ENCODE measurements at regions of chr17 and their contacts with region 1.

Region 1: GRCh38 chr17:3965118-3965803 is 1.0 kb upstream of the ATP2A3 start:
- DNase-seq: peak; percentile 37 to 71 (median 66)
- ATAC-seq: peak; percentile 64
- H3K4me3 ChIP-seq: peak overlapping the region; percentile 69
- H3K4me3 Mint-ChIP-seq: peak overlapping the region; percentile 88 to 96 (median 94)
- H3K27ac ChIP-seq: peak overlapping the region; percentile 75
- H3K27ac Mint-ChIP-seq: peak overlapping the region; percentile 82 to 97 (median 94)
- H3K4me1 ChIP-seq: peaks cover 31 to 36% of the 10 kb centered on the region in 2 donors
- H3K4me1 Mint-ChIP-seq: peaks cover 34 to 50% (median 44%) of the 10 kb centered on the region in 7 donors
- H3K27me3 ChIP-seq: no peaks in the 10 kb centered on the region
- H3K27me3 Mint-ChIP-seq: peaks cover 0 to 4% (median 0%) of the 10 kb centered on the region in 5 donors

Region 2: DNA sequence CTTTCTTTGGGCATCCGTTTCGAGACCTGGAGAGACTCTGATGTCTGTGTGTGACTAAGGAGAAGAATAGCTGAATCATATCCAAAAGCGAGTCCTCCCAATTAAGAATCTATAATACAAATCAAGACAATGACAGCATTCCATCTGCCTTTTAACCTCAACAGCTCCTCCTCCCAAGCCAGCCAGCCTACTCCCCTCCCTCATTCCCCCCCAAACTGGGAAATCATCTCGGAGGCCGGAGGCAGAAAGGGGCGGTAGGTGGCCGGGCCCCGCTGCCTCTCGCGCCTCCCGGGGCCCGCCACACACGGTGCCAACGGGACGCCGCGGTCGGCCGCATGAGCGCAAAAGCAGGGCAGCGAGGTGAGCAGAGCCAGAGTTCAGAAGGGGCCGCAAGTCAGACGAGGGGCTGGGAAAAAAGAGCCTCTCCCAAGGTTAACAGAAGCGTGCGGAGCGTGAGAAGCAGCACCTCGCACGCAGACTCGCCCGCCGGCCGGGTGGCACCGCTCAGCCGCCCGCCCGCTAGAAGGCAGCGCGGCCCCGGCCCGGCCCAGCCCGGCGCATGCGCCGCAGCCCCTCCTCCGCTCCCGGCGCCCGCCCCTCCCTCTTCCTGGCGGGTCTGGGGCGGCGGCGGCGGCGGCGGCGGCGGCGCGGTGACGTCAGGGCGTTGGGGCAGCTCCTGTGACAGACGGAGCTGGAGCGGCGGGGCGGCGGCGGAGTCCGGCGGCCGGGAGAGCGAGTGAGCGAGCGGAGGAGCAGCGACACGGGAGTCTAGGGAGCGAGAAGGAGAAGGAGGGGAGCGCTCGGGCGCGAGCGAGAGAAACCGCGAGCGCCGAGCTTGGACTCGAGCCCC is 1372.1 kb before region 1 on chr17 and contains the start of gene PAFAH1B1:
- CTCF ChIA-PET with region 1: no interaction called
- POLR2A ChIA-PET with region 1: no interaction called
- intact Hi-C with region 1: loop called in 1 of 2 experiments (anchors 5 kb)
- DNase-seq: peak; percentile 94 to 99 (median 97)
- ATAC-seq: peak; percentile 90
- H3K4me3 ChIP-seq: peak within 1 kb of the TSS; percentile 69
- H3K4me3 Mint-ChIP-seq: peak within 1 kb of the TSS; percentile 87 to 97 (median 92)
- H3K27ac ChIP-seq: peak within 1 kb of the TSS; percentile 90
- H3K27ac Mint-ChIP-seq: peak within 1 kb of the TSS; percentile 85 to 96 (median 92)
- H3K4me1 ChIP-seq: peaks cover 23 to 31% of the 10 kb centered on the region in 2 donors
- H3K4me1 Mint-ChIP-seq: peaks cover 20 to 38% (median 28%) of the 10 kb centered on the region in 7 donors
- H3K27me3 ChIP-seq: no peaks in the 10 kb centered on the region
- H3K27me3 Mint-ChIP-seq: peaks cover 0 to 6% (median 0%) of the 10 kb centered on the region in 5 donors
- total RNA-seq, gene PAFAH1B1: 112 to 156 (median 140) TPM

Region 3: DNA sequence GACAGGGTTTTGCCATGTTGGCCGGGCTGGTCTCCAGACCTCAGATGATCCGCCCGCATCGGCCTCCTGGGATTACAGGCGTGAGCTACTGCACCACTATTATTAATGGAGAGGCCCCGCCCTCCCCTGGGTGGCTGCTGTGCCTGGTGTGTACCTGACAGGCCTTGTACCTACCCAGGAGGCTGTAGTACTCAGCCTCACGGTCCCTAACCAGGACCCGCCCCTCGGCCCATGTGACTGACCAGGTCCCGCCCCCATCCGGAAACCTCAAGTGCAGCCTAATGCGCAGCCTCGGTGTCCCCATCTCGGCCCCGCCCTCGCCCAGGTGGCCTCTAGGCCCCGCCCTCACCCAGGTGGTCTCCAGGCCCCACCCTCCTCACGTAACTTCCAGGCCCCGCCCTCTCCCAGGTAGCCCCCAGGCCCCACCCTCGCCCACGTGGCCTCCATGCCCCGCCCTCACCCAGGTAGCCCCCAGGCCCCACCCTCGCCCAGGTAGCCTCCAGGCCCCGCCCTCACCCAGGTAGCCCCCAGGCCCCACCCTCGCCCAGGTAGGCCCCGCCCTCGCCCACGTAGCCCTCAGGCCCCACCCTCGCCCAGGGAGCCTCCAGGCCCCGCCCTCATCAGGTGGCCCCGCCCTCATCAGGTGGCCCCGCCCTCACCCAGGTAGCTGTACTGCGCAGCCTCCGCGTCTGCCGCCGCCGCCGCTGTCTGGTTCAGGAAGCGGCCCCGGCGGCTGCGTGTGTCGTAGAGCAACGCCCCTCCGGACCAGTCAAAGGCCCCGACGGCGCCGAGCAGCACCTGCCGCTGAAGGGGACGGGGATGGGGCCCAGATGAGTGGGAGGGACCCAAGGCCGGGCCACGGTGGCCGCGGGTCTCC is 210.6 kb before region 1 on chr17:
- CTCF ChIA-PET with region 1: no interaction called
- POLR2A ChIA-PET with region 1: no interaction called
- intact Hi-C with region 1: loop called in 1 of 2 experiments (anchors 10 kb)
- DNase-seq: peak; percentile 46 to 87 (median 77)
- ATAC-seq: peak; percentile 98
- H3K4me3 ChIP-seq: peak overlapping the region; percentile 59
- H3K4me3 Mint-ChIP-seq: peak overlapping the region in 7 of 10 donors; percentile 17 to 77 (median 57)
- H3K27ac ChIP-seq: peak overlapping the region; percentile 80
- H3K27ac Mint-ChIP-seq: peak overlapping the region in 8 of 9 donors; percentile 36 to 87 (median 80)
- H3K4me1 ChIP-seq: peaks cover 20 to 29% of the 10 kb centered on the region in 2 donors
- H3K4me1 Mint-ChIP-seq: peaks cover 16 to 39% (median 27%) of the 10 kb centered on the region in 7 donors
- H3K27me3 ChIP-seq: no peaks in the 10 kb centered on the region
- H3K27me3 Mint-ChIP-seq: no peaks in the 10 kb centered on the region

Region 4: DNA sequence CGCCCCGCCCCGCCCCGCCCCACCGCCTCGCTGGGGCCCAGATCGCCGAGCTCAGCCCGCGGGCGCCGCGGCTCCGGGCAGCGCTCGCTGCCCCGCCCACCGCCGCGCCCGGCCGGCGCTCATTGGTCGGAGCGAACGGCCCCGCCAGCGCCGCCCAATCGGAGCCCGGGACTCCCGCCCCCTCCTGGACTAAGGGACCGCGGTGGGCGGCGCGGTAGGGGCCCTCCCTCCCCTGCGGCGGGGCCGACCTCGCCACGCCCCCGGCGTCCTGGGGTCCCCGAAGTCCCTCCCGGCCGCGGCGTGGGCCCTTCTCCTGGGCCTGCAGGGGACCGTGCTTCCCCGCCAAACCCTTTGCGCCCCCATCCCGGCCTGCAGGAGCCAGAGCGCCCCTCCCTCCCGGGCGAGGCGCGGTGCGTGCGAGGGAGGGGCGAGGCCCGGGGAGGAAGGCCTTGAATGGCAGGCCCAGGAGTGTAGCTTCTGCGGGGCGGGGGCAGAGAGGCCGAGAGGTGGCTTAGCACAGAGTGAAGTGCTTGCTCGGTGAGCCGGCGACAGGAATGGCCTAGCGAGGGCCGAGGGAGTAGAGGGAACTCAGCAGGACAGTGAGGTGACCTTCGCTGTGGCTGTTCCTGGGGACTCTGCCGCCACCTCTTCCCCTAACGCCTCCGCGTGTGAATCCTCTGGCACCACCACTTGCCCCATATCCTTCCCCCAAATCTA is 72.1 kb before region 1 on chr17 and contains the start of gene CAMKK1:
- CTCF ChIA-PET with region 1: no interaction called
- POLR2A ChIA-PET with region 1: interaction called, 8 read pairs
- intact Hi-C with region 1: loop called (anchors 1 kb)
- DNase-seq: peak; percentile 71 to 96 (median 85)
- ATAC-seq: peak; percentile 87
- H3K4me3 ChIP-seq: peak within 1 kb of the TSS; percentile 70
- H3K4me3 Mint-ChIP-seq: peak within 1 kb of the TSS; percentile 81 to 90 (median 86)
- H3K27ac ChIP-seq: peak within 1 kb of the TSS; percentile 77
- H3K27ac Mint-ChIP-seq: peak within 1 kb of the TSS; percentile 73 to 93 (median 88)
- H3K4me1 ChIP-seq: peaks cover 11 to 23% of the 10 kb centered on the region in 2 donors
- H3K4me1 Mint-ChIP-seq: peaks cover 23 to 45% (median 35%) of the 10 kb centered on the region in 7 donors
- H3K27me3 ChIP-seq: no peaks in the 10 kb centered on the region
- H3K27me3 Mint-ChIP-seq: peaks cover 0 to 7% (median 0%) of the 10 kb centered on the region in 5 donors
- total RNA-seq, gene CAMKK1: 4.8 to 12.5 (median 6.3) TPM

Region 5: GRCh38 chr17:3913531-3914311 is 51.5 kb before region 1 on chr17:
- CTCF ChIA-PET with region 1: interaction called, 17 read pairs
- POLR2A ChIA-PET with region 1: interaction called, 10 read pairs
- intact Hi-C with region 1: loop called (anchors 1 to 5 kb)
- DNase-seq: peak; percentile 65 to 85 (median 76)
- ATAC-seq: peak; percentile 78
- H3K4me3 ChIP-seq: no peak overlapping the region
- H3K4me3 Mint-ChIP-seq: peak overlapping the region in 2 of 10 donors; percentile 23 to 77
- H3K27ac ChIP-seq: no peak overlapping the region
- H3K27ac Mint-ChIP-seq: peak overlapping the region; percentile 31 to 86 (median 76)
- H3K4me1 ChIP-seq: peaks cover 27 to 38% of the 10 kb centered on the region in 2 donors
- H3K4me1 Mint-ChIP-seq: peaks cover 26 to 64% (median 47%) of the 10 kb centered on the region in 7 donors
- H3K27me3 ChIP-seq: no peaks in the 10 kb centered on the region
- H3K27me3 Mint-ChIP-seq: no peaks in the 10 kb centered on the region

Region 6: DNA sequence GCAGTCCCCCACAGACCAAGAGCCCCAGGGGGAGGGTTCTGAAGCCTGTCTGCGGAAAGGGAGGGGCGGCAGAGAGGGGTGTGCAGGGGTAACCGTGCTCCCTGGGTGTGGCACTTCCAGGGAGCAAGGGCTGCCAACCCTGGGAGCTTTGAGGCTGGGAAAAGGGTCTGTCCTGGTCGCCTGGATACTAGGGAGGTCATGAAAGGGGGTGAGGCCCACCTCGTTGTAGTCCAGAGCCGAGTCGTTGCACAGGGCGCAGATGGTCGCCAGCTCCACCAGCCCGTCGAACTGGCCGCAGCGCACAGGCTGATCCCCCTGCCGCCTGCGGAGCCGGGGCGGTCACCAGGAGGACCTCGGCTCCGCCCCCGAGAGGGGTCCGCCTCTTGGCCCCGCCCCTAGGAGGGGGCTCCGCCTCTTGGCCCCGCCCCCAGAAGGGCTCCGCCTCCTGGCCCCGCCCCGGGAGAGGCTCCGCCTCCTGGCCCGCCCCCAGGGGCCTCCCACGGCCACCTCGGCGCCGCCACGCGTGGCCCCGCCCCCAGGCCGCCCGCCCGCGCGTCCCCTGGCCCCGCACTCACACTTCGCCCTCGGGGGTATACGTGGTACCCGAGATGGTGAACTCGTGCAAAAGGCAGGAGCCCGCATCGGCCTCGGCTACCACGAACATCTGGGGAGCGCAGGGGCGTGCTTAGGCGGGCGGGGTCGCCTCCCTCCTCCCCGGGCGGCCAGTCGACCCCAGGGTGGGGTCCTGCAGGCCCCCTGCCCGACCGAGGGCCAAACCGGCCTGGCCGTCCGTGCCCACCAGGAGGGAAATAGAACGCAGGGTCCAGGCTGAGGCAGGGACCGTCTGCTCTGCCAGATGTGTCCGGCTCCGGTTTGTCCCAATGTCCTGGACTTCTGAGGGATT is 20.5 kb before region 1 on chr17:
- CTCF ChIA-PET with region 1: interaction called, 3 read pairs
- POLR2A ChIA-PET with region 1: interaction called, 9 read pairs
- intact Hi-C with region 1: loop called (anchors 1 kb)
- DNase-seq: peak in 8 of 9 donors; percentile 21 to 50 (median 41)
- ATAC-seq: peak; percentile 93
- H3K4me3 ChIP-seq: no peak overlapping the region
- H3K4me3 Mint-ChIP-seq: no peak overlapping the region
- H3K27ac ChIP-seq: no peak overlapping the region
- H3K27ac Mint-ChIP-seq: no peak overlapping the region
- H3K4me1 ChIP-seq: no peaks in the 10 kb centered on the region
- H3K4me1 Mint-ChIP-seq: peaks cover 0 to 5% (median 0%) of the 10 kb centered on the region in 7 donors
- H3K27me3 ChIP-seq: no peaks in the 10 kb centered on the region
- H3K27me3 Mint-ChIP-seq: no peaks in the 10 kb centered on the region

Region 7: DNA sequence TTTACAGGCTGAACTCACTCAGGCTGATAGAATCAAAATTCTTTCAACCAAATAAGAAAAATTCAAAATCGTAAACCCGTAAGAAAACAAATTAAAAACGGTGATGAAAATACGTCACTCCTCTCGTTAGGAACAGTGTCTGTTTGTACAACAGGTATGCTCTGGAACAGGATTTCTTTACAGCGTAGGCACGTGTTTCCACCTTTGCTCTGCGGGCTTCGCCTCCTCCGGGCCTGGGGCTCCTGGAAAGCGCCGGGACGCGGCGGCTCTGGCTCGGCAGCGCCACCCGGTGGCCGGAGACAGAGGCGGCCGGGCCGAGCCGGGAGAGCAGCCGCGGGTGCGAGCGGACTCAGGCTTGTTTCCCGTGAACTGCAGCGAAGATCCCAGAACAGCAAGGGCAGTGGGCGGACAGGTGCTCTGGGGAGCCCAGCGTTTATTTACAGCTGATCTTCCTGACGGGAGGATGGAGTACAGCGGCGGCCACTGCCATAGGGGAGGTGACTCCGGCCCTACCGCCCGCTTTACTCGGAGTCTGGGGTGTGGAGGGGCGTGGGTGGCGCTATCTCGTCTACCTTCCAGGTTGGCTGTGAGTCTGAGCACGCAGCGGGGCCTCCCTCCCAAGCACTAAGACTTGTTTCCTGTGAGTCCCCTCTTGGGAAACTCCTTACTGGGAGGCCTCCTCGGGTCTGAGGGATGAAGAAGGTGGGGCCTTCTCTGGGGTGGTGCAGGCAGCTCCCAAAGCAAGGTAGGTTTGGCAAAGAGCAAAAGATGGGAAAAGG is 39.4 kb after region 1 on chr17:
- CTCF ChIA-PET with region 1: interaction called, 7 read pairs
- POLR2A ChIA-PET with region 1: interaction called, 3 read pairs
- intact Hi-C with region 1: loop called (anchors 1 to 2 kb)
- DNase-seq: peak; percentile 32 to 80 (median 64)
- ATAC-seq: peak; percentile 68
- H3K4me3 ChIP-seq: no peak overlapping the region
- H3K4me3 Mint-ChIP-seq: no peak overlapping the region
- H3K27ac ChIP-seq: no peak overlapping the region
- H3K27ac Mint-ChIP-seq: peak overlapping the region in 2 of 9 donors; percentile 65
- H3K4me1 ChIP-seq: peaks cover 0 to 7% of the 10 kb centered on the region in 2 donors
- H3K4me1 Mint-ChIP-seq: peaks cover 4 to 17% (median 7%) of the 10 kb centered on the region in 7 donors
- H3K27me3 ChIP-seq: no peaks in the 10 kb centered on the region
- H3K27me3 Mint-ChIP-seq: no peaks in the 10 kb centered on the region